WTC11 (cell line): ENCODE measurements at regions of chr5 and their contacts with region 1.

Region 1: DNA sequence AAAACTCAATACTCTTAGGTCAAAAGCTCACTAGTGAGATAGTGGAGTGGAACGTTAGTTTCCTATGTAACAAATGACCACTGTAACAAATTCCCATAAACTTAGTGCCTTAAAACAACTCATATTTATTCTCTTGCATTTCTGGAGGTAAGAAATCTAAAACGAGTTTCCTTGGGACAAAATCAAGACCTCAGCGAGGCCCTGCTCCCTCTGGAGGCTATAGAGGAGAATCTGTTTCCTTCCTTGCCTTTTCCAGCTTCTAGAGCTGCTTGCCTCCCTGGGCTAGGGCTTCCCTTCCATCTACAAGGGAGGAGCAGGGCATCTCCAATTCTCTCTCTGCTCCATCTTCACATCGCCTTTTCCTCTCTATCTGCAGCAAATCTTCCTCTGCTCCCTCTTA is 32.0 kb downstream of the SEMA5A start:
- DNase-seq: peak; percentile 15
- ATAC-seq: peak; percentile 84
- H3K4me3 Mint-ChIP-seq: no peak overlapping the region
- H3K27ac Mint-ChIP-seq: no peak overlapping the region
- H3K4me1 Mint-ChIP-seq: peaks cover 8% of the 10 kb centered on the region
- H3K27me3 Mint-ChIP-seq: no peaks in the 10 kb centered on the region
- CTCF ChIP-seq: no peak

Region 2: GRCh38 chr5:9497347-9497746 is 16.5 kb before region 1 on chr5:
- CTCF ChIA-PET with region 1: interaction called, 10 read pairs
- POLR2A ChIA-PET with region 1: no interaction called
- DNase-seq: no peak
- ATAC-seq: no peak
- H3K4me3 Mint-ChIP-seq: no peak overlapping the region
- H3K27ac Mint-ChIP-seq: no peak overlapping the region
- H3K4me1 Mint-ChIP-seq: peaks cover 34% of the 10 kb centered on the region
- H3K27me3 Mint-ChIP-seq: no peaks in the 10 kb centered on the region
- CTCF ChIP-seq: no peak